Psoas muscle (tissue), 8 donors: ENCODE measurements at regions of chr5 and their contacts with region 1.

Region 1: DNA sequence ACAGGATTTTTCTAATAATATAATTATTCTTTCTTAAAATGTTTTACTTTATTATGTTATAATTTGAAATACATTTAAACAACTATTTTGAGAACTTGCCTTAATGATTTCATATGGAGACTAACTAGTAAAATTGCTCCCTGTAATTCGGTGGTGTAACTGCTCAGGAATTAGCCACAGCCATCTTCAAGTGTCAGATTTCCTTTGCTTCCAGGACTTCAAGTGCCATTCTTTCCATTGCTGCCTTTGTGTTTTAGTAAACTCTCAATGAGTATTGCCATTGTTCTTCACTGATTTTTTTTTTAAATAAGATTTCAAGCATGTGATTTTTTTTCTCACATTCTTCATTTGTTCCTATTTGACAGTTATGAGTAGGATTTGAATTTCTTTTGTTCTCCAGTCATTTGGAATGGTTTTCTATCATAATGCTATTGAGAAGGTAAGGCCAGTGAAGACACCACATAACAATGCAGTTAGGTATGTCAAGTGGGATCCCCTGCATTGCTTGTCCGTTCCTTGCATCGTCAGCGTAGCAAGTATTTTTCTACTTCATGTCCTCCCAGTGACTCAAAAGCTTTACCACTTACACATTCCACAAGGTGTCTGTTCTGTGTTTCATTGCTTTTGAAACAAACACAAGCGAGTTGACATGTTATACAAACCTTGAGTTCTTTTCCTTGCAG is 83.7 kb downstream of the LNPEP start:
- DNase-seq: no peak
- ATAC-seq: peak; percentile 53 to 83 (median 66)
- H3K4me3 ChIP-seq: no peak overlapping the region
- H3K27ac ChIP-seq: peak overlapping the region; percentile 20
- H3K4me1 ChIP-seq: peaks cover 5% of the 10 kb centered on the region
- H3K27me3 ChIP-seq: no peaks in the 10 kb centered on the region
- CTCF ChIP-seq: no peak

Region 2: DNA sequence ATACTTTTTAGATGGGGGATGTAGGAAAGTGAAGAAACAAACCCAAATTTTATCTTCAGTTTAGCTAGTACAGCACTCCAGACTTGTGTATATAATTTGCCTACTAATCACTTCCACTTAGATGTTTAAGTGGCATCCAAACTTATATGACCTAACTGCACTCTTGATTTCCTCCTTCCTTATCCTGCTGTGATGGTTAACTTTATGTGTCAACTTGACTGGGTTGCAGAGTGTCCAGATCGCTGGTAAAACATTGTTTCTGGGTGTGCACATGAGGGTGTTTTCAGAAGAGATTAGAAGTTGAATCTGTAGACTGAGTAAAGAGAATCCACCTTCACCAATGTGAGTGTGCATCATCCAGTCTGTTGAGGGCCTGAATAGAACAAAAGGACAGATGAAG is 666.4 kb before region 1 on chr5:
- intact Hi-C with region 1: no loop called
- DNase-seq: no peak
- ATAC-seq: no peak
- H3K4me3 ChIP-seq: no peak overlapping the region
- H3K27ac ChIP-seq: no peak overlapping the region
- H3K4me1 ChIP-seq: no peaks in the 10 kb centered on the region
- H3K27me3 ChIP-seq: no peaks in the 10 kb centered on the region
- CTCF ChIP-seq: no peak

Region 3: GRCh38 chr5:96876292-96876850 is 143.2 kb before region 1 on chr5 and contains the start of gene ERAP2:
- intact Hi-C with region 1: loop called in 1 of 2 experiments (anchors 10 kb)
- DNase-seq: no peak
- ATAC-seq: peak; percentile 52 to 81 (median 68)
- H3K4me3 ChIP-seq: peak within 1 kb of the TSS; percentile 86
- H3K27ac ChIP-seq: peak within 1 kb of the TSS; percentile 84
- H3K4me1 ChIP-seq: peaks cover 8% of the 10 kb centered on the region
- H3K27me3 ChIP-seq: no peaks in the 10 kb centered on the region
- CTCF ChIP-seq: no peak
- total RNA-seq, gene ERAP2: 3.0 to 6.4 (median 3.2) TPM